CD8-positive, alpha-beta T cell (primary cell): ENCODE measurements at regions of chr3 and their contacts with region 1.

Region 1: GRCh38 chr3:136752422-136753325 is 496 bp upstream of the STAG1 start:
- DNase-seq: peak; percentile 98 to 99 (median 99)
- ATAC-seq: peak; percentile 81
- H3K4me3 ChIP-seq: peak overlapping the region; percentile 71 to 73
- H3K4me3 Mint-ChIP-seq: peak overlapping the region; percentile 95
- H3K27ac ChIP-seq: peak overlapping the region; percentile 90 to 96
- H3K27ac Mint-ChIP-seq: peak overlapping the region; percentile 91
- H3K4me1 ChIP-seq: peaks cover 37% of the 10 kb centered on the region
- H3K4me1 Mint-ChIP-seq: peaks cover 40% of the 10 kb centered on the region
- H3K27me3 ChIP-seq: no peaks in the 10 kb centered on the region
- H3K27me3 Mint-ChIP-seq: no peaks in the 10 kb centered on the region
- CTCF ChIP-seq: no peak

Region 2: DNA sequence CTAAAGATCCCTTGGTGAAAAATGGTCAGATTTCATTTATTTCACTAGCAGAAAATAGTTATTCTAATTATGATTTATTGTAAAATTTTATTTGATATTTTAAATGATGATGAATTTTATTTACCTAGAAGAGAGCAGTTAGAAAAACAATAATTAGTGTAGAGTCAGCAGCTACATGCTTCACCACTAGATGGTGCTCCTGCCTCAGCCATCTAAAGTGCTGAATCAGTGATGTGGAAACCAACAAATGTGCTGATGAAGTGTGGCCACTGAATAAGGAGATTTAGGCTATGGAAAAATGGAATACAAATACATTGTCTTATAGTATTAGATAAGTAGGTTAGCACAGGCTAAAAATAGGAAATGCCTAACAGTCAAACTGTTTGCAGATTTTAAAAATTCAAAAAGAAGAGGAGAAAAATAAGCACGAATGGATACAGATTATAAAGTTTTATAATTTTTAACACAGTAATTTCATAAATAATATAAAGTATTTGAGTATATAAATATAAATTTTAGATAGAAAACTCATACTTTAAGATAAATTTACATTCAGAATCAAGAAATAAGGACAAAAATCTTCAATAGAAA is 677.4 kb before region 1 on chr3:
- CTCF ChIA-PET with region 1: interaction called, 16 read pairs
- POLR2A ChIA-PET with region 1: interaction called, 13 read pairs
- intact Hi-C with region 1: loop called (anchors 1 kb)
- DNase-seq: peak; percentile 52 to 85 (median 74)
- ATAC-seq: peak; percentile 55
- H3K4me3 ChIP-seq: no peak overlapping the region
- H3K4me3 Mint-ChIP-seq: no peak overlapping the region
- H3K27ac ChIP-seq: no peak overlapping the region
- H3K27ac Mint-ChIP-seq: no peak overlapping the region
- H3K4me1 ChIP-seq: no peaks in the 10 kb centered on the region
- H3K4me1 Mint-ChIP-seq: peaks cover 4% of the 10 kb centered on the region
- H3K27me3 ChIP-seq: no peaks in the 10 kb centered on the region
- H3K27me3 Mint-ChIP-seq: no peaks in the 10 kb centered on the region
- CTCF ChIP-seq: peak; percentile 99

Region 3: DNA sequence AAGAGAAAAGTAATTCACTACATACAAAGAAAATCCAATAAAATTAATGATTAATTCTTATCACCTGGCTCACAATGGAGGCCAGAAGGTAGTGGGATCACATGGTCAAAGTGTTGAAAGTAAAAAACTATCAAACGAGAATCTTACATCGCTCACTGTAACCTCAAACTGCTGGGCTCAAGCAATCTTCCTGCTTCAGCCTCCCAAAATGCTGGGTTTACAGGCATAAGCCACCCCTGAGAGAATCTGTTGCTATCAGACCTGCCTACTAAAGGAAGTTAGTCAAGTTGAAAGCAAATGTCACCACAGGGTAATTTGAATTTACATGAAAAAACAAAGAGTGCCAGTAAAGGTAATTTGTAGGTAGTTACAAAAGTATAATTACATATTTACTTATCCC is 399.2 kb before region 1 on chr3:
- CTCF ChIA-PET with region 1: interaction called, 3 read pairs
- POLR2A ChIA-PET with region 1: no interaction called
- intact Hi-C with region 1: loop called in 1 of 2 experiments (anchors 2 kb)
- DNase-seq: no peak
- ATAC-seq: no peak
- H3K4me3 ChIP-seq: no peak overlapping the region
- H3K4me3 Mint-ChIP-seq: no peak overlapping the region
- H3K27ac ChIP-seq: no peak overlapping the region
- H3K27ac Mint-ChIP-seq: no peak overlapping the region
- H3K4me1 ChIP-seq: no peaks in the 10 kb centered on the region
- H3K4me1 Mint-ChIP-seq: peaks cover 5% of the 10 kb centered on the region
- H3K27me3 ChIP-seq: no peaks in the 10 kb centered on the region
- H3K27me3 Mint-ChIP-seq: no peaks in the 10 kb centered on the region
- CTCF ChIP-seq: no peak

Region 4: GRCh38 chr3:136595913-136596697 is 156.6 kb before region 1 on chr3:
- CTCF ChIA-PET with region 1: interaction called, 5 read pairs
- POLR2A ChIA-PET with region 1: no interaction called
- intact Hi-C with region 1: loop called in 1 of 2 experiments (anchors 5 kb)
- DNase-seq: peak in 1 of 9 experiments; percentile 18
- ATAC-seq: peak; percentile 34
- H3K4me3 ChIP-seq: no peak overlapping the region
- H3K4me3 Mint-ChIP-seq: no peak overlapping the region
- H3K27ac ChIP-seq: peak overlapping the region in 1 of 2 experiments; percentile 38
- H3K27ac Mint-ChIP-seq: peak overlapping the region; percentile 9
- H3K4me1 ChIP-seq: peaks cover 15% of the 10 kb centered on the region
- H3K4me1 Mint-ChIP-seq: peaks cover 36% of the 10 kb centered on the region
- H3K27me3 ChIP-seq: no peaks in the 10 kb centered on the region
- H3K27me3 Mint-ChIP-seq: no peaks in the 10 kb centered on the region
- CTCF ChIP-seq: no peak

Region 5: DNA sequence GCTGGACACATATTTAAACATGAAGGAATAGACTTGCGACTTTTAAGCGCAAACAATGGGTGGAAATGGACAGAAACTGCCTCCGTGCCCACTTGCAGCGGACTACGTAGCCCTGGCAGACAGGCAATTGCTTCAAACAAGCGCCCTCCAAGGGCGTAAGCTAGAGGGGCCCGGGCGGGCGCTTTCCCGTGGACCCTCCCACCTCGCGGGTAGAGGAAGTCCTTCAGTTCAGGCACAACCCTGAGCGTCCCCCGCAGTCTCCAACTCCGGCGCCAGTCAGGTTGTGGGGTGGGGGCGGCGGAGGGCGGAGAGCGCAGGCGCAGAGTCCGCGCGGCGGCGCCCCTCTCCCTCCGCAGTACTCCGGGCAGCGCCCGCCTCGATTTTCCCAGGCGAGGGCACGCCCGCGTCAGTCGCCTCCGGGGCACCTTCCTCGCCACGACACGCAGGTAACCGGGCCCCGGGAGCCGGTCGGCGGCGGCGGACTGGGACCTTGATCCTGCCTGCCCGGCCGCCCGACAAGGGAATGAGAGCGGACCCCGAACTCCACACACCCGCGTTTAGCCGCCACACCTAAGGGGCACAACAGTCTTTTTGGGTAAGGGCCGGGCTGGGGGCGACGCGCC is 66.2 kb after region 1 on chr3 and contains the start of gene SLC35G2:
- CTCF ChIA-PET with region 1: no interaction called
- POLR2A ChIA-PET with region 1: no interaction called
- intact Hi-C with region 1: loop called (anchors 5 kb)
- DNase-seq: peak in 7 of 9 experiments; percentile 6 to 60 (median 37)
- ATAC-seq: peak; percentile 74
- H3K4me3 ChIP-seq: peak within 1 kb of the TSS; percentile 55 to 63
- H3K4me3 Mint-ChIP-seq: peak within 1 kb of the TSS; percentile 86
- H3K27ac ChIP-seq: peak within 1 kb of the TSS in 1 of 2 experiments; percentile 30
- H3K27ac Mint-ChIP-seq: peak within 1 kb of the TSS; percentile 57
- H3K4me1 ChIP-seq: peaks cover 11% of the 10 kb centered on the region
- H3K4me1 Mint-ChIP-seq: peaks cover 22% of the 10 kb centered on the region
- H3K27me3 ChIP-seq: peaks cover 5 to 13% of the 10 kb centered on the region in 2 experiments
- H3K27me3 Mint-ChIP-seq: peaks cover 40% of the 10 kb centered on the region
- CTCF ChIP-seq: no peak
- total RNA-seq, gene SLC35G2: 0.24 TPM in 1 of 2 experiments, not detected in the other

Region 6: GRCh38 chr3:137420198-137420995 is 667.7 kb after region 1 on chr3:
- CTCF ChIA-PET with region 1: no interaction called
- POLR2A ChIA-PET with region 1: no interaction called
- intact Hi-C with region 1: no loop called
- DNase-seq: no peak
- ATAC-seq: no peak
- H3K4me3 ChIP-seq: no peak overlapping the region
- H3K4me3 Mint-ChIP-seq: no peak overlapping the region
- H3K27ac ChIP-seq: no peak overlapping the region
- H3K27ac Mint-ChIP-seq: no peak overlapping the region
- H3K4me1 ChIP-seq: no peaks in the 10 kb centered on the region
- H3K4me1 Mint-ChIP-seq: no peaks in the 10 kb centered on the region
- H3K27me3 ChIP-seq: no peaks in the 10 kb centered on the region
- H3K27me3 Mint-ChIP-seq: no peaks in the 10 kb centered on the region
- CTCF ChIP-seq: no peak

Region 7: GRCh38 chr3:138174421-138175122 is 1421.9 kb after region 1 on chr3 and contains the start of gene DBR1:
- CTCF ChIA-PET with region 1: no interaction called
- POLR2A ChIA-PET with region 1: interaction called, 3 read pairs
- intact Hi-C with region 1: loop called in 1 of 2 experiments (anchors 10 kb)
- DNase-seq: peak; percentile 51 to 89 (median 74)
- ATAC-seq: peak; percentile 87
- H3K4me3 ChIP-seq: peak within 1 kb of the TSS; percentile 76
- H3K4me3 Mint-ChIP-seq: peak within 1 kb of the TSS; percentile 99
- H3K27ac ChIP-seq: peak within 1 kb of the TSS; percentile 71 to 79
- H3K27ac Mint-ChIP-seq: peak within 1 kb of the TSS; percentile 98
- H3K4me1 ChIP-seq: peaks cover 21% of the 10 kb centered on the region
- H3K4me1 Mint-ChIP-seq: peaks cover 40% of the 10 kb centered on the region
- H3K27me3 ChIP-seq: no peaks in the 10 kb centered on the region
- H3K27me3 Mint-ChIP-seq: no peaks in the 10 kb centered on the region
- CTCF ChIP-seq: no peak
- total RNA-seq, gene DBR1: 31.2 to 31.9 TPM